HepG2 (cell line): ENCODE measurements at regions of chrX and their contacts with region 1.

Region 1: GRCh38 chrX:7147978-7148824 is at the start of gene PUDP:
- DNase-seq: peak; percentile 57
- ATAC-seq: peak; percentile 95
- H3K4me3 ChIP-seq: peak within 1 kb of the TSS; percentile 73 to 83 (median 79)
- H3K27ac ChIP-seq: peak within 1 kb of the TSS; percentile 66
- H3K4me1 ChIP-seq: peaks cover 19% of the 10 kb centered on the region
- H3K27me3 ChIP-seq: no peaks in the 10 kb centered on the region; a peak in 1 of 5 replicates
- CTCF ChIP-seq: peak; percentile 43
- EP300 ChIP-seq: no peak
- POLR2A ChIP-seq: peak; percentile 54 to 59; a peak in 3 of 4 replicates
- RAD21 ChIP-seq: no peak
- total RNA-seq, gene PUDP: 7.5 and 16.3 TPM in 2 replicates

Region 2: GRCh38 chrX:7047951-7048350 is 100.2 kb before region 1 on chrX:
- CTCF ChIA-PET with region 1: no interaction called
- POLR2A ChIA-PET with region 1: no interaction called
- in situ Hi-C with region 1: no loop called
- intact Hi-C with region 1: no loop called
- DNase-seq: no peak
- ATAC-seq: no peak
- H3K4me3 ChIP-seq: no peak overlapping the region
- H3K27ac ChIP-seq: no peak overlapping the region
- H3K4me1 ChIP-seq: peaks cover 16% of the 10 kb centered on the region
- H3K27me3 ChIP-seq: no peaks in the 10 kb centered on the region
- CTCF ChIP-seq: no peak
- EP300 ChIP-seq: no peak
- POLR2A ChIP-seq: no peak
- RAD21 ChIP-seq: no peak

Region 3: DNA sequence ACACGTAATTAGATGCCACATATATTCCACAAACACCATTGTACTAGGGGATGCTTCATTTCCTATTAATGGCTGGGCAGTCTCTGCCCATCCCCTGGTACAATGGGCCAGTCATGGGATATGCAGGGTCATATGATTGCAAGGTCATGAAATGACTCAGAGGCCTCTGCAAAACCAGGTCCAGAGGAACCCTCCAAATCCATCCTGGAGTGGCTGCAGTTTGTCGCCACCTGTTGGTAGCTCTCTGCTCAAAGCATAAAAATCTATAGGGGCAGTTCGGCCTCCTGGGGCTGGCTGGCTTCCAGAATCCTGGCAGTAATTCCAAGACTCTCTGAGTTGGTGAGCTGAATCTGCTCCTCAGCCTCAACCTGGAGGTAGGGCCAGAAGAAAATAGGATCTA is 22.7 kb after region 1 on chrX:
- CTCF ChIA-PET with region 1: no interaction called
- POLR2A ChIA-PET with region 1: no interaction called
- in situ Hi-C with region 1: no loop called
- intact Hi-C with region 1: loop called (anchors 1 kb)
- DNase-seq: peak; percentile 29
- ATAC-seq: no peak
- H3K4me3 ChIP-seq: no peak overlapping the region
- H3K27ac ChIP-seq: no peak overlapping the region
- H3K4me1 ChIP-seq: no peaks in the 10 kb centered on the region
- H3K27me3 ChIP-seq: no peaks in the 10 kb centered on the region
- CTCF ChIP-seq: peak; percentile 39
- EP300 ChIP-seq: no peak
- POLR2A ChIP-seq: no peak
- RAD21 ChIP-seq: 0 out of 2 replicates have a peak, but pooled peaks have one; percentile 23

Region 4: DNA sequence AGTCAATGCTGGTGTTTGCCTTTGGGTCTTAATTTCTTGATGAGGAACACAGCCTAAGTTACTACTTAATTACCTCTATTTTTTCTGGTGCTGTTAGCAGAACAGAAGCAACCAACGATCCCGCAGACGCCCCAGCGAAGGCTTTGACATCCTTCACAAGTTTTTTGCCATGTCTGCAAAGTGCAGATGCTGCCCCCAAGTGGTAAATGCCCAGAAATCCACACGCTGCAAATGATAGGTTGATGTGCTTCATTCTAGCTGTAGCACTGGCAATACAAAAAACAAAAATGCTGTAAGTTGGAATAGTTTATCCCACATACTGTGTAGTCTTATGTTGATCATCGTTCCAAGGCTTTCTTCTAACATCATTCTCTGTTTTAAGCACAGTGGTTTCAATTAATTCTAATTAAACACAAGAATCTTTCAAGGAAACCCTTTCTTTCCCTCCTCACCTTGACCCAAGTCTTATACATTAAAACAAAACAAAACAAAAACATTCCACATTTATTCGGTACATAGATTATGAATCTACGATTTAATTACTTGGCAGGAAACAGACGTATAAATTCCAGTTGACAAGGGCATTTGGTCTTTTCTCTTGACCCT is 777.8 kb after region 1 on chrX:
- CTCF ChIA-PET with region 1: no interaction called
- POLR2A ChIA-PET with region 1: no interaction called
- in situ Hi-C with region 1: no loop called
- intact Hi-C with region 1: loop called (anchors 2 kb)
- DNase-seq: peak; percentile 53
- ATAC-seq: 0 out of 3 replicates have a peak, but pooled peaks have one; percentile 5
- H3K4me3 ChIP-seq: peak overlapping the region in 2 of 3 experiments; percentile 66 to 80; a peak in 3 of 6 replicates
- H3K27ac ChIP-seq: no peak overlapping the region
- H3K4me1 ChIP-seq: peaks cover 9% of the 10 kb centered on the region
- H3K27me3 ChIP-seq: no peaks in the 10 kb centered on the region
- CTCF ChIP-seq: peak; percentile 80
- EP300 ChIP-seq: no peak
- POLR2A ChIP-seq: no peak
- RAD21 ChIP-seq: peak; percentile 40; the same call in 1 of the 2 replicates